ENCODE measurements at regions of chr13 and their contacts with region 1.

Region 1: GRCh38 chr13:77329133-77329910 is 2.4 kb upstream of the MYCBP2 start:
- DNase-seq: peak; percentile 88
- H3K4me3 Mint-ChIP-seq: peak overlapping the region; percentile 88
- H3K27ac Mint-ChIP-seq: peak overlapping the region; percentile 93
- H3K4me1 Mint-ChIP-seq: peaks cover 38% of the 10 kb centered on the region
- H3K27me3 Mint-ChIP-seq: peaks cover 5% of the 10 kb centered on the region

Region 2: GRCh38 chr13:77184455-77184854 is 144.9 kb before region 1 on chr13:
- intact Hi-C with region 1: loop called (anchors 1 kb)
- DNase-seq: no peak
- H3K4me3 Mint-ChIP-seq: no peak overlapping the region
- H3K27ac Mint-ChIP-seq: peak overlapping the region; percentile 49
- H3K4me1 Mint-ChIP-seq: peaks cover 23% of the 10 kb centered on the region
- H3K27me3 Mint-ChIP-seq: no peaks in the 10 kb centered on the region

Region 3: GRCh38 chr13:77310579-77311279 is 18.6 kb before region 1 on chr13:
- intact Hi-C with region 1: loop called (anchors 1 kb)
- DNase-seq: no peak
- H3K4me3 Mint-ChIP-seq: no peak overlapping the region
- H3K27ac Mint-ChIP-seq: no peak overlapping the region
- H3K4me1 Mint-ChIP-seq: peaks cover 82% of the 10 kb centered on the region
- H3K27me3 Mint-ChIP-seq: no peaks in the 10 kb centered on the region

Region 4: GRCh38 chr13:77386880-77387606 is 57.7 kb after region 1 on chr13:
- intact Hi-C with region 1: loop called (anchors 1 kb)
- DNase-seq: no peak
- H3K4me3 Mint-ChIP-seq: no peak overlapping the region
- H3K27ac Mint-ChIP-seq: no peak overlapping the region
- H3K4me1 Mint-ChIP-seq: peaks cover 11% of the 10 kb centered on the region
- H3K27me3 Mint-ChIP-seq: peaks cover 42% of the 10 kb centered on the region

Region 5: GRCh38 chr13:77751513-77752456 is 422.5 kb after region 1 on chr13:
- intact Hi-C with region 1: loop called (anchors 1 kb)
- DNase-seq: peak; percentile 44
- H3K4me3 Mint-ChIP-seq: no peak overlapping the region
- H3K27ac Mint-ChIP-seq: peak overlapping the region; percentile 42
- H3K4me1 Mint-ChIP-seq: peaks cover 18% of the 10 kb centered on the region
- H3K27me3 Mint-ChIP-seq: no peaks in the 10 kb centered on the region

Measured in activated T-helper 1 cell treated with anti-CD3 and anti-CD28 coated beads, Interleukin-12 subunit alpha, Interleukin-12 subunit beta, Interleukin-2, Interleukin-4 antibody, amounts not matched to agents 30 ng/mL and 10 ng/mL and 1 ng/mL, durations not matched to agents 14 hours and 24 hours and 36 hours (primary cell).